ENCODE measurements at regions of chr6 and their contacts with region 1.

Region 1: DNA sequence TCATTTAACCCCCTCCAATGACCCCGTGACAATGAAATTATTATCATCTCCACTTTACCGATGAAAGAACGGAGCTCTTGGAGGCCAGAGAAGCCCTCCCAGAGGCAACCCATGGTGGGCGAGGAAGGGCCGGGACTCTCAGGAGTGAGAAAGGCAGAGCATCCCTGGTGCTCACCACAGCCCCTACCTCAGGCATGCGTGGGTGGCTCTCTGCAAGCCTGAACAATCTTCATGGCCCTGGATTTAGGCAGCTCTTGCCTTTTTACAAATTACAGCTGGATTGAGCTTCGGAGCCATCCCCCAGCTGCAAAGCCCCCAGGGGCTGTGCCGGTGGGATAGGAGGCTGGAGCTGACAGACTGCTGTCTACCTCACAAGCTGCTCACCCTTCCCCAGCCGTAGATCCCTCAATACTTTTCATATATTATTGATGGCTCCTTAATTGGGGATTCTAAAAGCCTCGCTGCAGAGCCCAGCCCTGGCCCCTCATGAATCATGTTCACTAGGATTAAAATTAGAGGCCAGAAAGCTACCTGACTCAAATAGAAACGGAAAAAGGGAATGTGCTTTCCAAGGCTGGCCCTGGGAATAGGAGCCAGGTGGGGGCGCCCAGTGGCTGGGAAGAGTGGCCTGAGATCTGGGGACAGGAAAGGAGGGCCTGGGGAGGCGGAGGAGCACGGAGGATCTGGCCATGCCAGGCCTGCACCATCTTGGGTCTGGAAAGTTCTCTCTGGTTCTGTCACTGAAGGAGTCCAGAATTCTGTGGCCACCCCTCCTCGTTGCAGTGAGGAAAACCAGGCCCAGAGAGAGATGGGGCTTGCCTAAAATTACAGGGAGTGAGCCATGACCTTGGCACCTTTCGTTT is 29.1 kb downstream of the CPNE5 start:
- DNase-seq: no peak
- H3K4me3 ChIP-seq: no peak overlapping the region
- CTCF ChIP-seq: no peak

Region 2: GRCh38 chr6:36735110-36736071 is 74.8 kb before region 1 on chr6:
- in situ Hi-C with region 1: no loop called
- DNase-seq: peak; percentile 38
- H3K4me3 ChIP-seq: no peak overlapping the region
- CTCF ChIP-seq: no peak

Region 3: DNA sequence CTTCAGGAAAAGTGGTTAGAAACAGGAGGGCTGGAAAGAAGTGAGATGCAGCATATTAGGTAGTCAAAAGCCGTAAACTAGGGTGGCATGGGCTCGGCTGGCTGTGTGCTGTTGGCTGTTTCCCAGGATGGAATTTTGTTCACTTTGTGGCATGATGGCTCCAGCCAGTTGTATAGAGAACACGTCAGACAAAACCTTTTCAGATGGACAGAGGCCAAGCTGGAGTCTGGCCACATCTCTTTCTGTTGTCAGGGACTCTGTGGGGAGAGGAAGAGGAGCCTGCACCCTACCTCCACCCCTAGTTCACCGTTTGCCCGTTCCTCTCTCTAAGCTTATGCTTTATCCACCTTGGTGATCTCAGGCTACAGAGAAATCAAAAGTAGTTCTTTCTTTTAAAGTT is 97.6 kb after region 1 on chr6:
- in situ Hi-C with region 1: loop called (anchors 5 kb)
- DNase-seq: peak; percentile 31
- H3K4me3 ChIP-seq: no peak overlapping the region
- CTCF ChIP-seq: no peak

Region 4: GRCh38 chr6:36985808-36986703 is 175.9 kb after region 1 on chr6 and contains the start of gene MTCH1:
- in situ Hi-C with region 1: no loop called
- DNase-seq: peak; percentile 68
- H3K4me3 ChIP-seq: peak within 1 kb of the TSS; percentile 95
- CTCF ChIP-seq: no peak

Region 5: DNA sequence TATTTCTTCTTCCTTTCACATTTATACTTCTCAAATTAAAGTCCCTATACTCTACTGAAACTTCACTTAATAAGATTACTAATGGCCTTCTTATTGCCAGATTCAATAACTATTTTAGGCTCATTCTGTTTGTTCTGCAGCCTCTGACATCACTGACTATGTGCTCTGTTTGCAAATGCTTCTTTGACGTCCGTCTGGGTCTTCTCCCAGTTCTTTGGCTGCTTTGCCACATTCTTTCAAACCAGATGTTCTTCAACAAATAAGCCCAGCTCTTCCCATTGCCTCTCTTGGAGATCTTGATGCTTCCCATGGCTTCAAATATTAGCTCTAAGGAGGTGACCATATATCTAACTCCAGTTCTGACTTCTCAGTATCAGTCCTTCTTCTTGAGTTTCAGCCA is 1712.2 kb after region 1 on chr6:
- in situ Hi-C with region 1: no loop called
- DNase-seq: peak; percentile 27
- H3K4me3 ChIP-seq: no peak overlapping the region
- CTCF ChIP-seq: no peak

Measured in astrocyte of the cerebellum (primary cell).